ENCODE measurements at regions of chr1 and their contacts with region 1.

Region 1: DNA sequence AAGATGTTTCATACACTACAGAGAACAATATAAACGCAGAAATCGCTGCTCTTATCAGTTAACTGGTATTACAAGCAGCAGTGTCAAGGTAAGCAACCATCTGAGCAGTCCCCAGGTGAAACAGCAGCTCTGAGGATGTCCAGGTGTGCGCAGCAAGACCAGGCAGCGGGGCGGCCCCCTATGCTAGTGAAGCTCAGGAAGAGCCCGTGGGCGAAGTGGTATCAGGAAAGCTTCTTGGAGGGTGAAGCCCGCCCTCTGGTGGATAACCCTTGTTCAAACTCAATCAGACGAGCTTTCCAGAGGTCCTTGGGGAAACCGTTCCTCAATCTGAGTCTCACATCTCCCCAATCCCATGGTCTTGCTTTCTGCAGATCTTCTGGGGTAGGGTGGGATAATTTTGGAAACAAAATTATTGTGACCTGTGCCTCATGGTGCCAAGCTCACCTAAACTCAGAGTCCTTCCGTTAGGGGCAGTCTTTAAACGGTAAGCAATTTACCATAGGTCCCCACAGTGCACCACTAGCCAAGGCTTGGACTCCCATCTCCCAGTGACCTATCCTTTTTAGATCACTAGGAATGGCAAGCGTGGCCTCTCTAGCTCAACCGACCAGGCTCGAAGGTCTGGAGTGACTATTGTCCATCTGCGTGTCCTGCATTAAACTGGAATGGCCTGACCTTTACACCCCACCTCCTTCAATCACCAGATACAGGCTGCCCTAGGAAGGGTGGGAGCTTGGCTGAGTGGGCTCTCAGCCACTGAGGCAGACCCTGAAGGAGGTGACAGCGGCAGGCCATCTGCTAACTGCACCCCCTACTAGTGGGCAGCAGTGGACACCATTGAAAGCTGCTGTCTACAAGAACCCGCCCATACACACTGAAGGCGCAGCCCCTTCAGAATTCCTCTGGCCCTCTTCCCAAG is 13.6 kb upstream of the FAM110D start:
- DNase-seq: no peak
- H3K4me3 ChIP-seq: no peak overlapping the region
- CTCF ChIP-seq: peak; percentile 76

Region 2: GRCh38 chr1:26035959-26036755 is 109.1 kb before region 1 on chr1:
- CTCF ChIA-PET with region 1: interaction called, 105 read pairs
- POLR2A ChIA-PET with region 1: interaction called, 3 read pairs
- DNase-seq: no peak
- H3K4me3 ChIP-seq: peak overlapping the region; percentile 79
- CTCF ChIP-seq: peak; percentile 97

Region 3: DNA sequence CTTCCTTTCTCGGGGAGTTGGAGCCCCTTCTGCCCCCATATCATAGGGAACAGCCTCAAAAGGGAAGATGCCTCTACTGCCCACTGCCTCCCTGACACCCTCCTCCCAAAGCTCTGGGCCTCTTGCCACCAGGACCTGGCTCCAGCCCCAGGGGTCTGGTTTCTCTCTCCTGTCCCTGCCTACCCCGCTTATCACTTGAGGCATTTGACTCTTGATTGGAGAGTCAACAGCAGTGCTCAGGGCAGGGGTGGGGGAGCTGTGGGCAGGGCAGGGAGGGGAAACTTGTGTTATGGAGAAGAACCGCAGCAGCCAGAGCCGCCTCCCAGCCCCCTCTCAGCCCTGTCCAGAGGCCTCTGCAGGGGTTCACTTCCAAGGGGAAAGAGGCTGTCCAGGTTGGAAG is 78.4 kb before region 1 on chr1:
- CTCF ChIA-PET with region 1: interaction called, 14 read pairs
- POLR2A ChIA-PET with region 1: no interaction called
- DNase-seq: no peak
- H3K4me3 ChIP-seq: no peak overlapping the region
- CTCF ChIP-seq: no peak

Region 4: DNA sequence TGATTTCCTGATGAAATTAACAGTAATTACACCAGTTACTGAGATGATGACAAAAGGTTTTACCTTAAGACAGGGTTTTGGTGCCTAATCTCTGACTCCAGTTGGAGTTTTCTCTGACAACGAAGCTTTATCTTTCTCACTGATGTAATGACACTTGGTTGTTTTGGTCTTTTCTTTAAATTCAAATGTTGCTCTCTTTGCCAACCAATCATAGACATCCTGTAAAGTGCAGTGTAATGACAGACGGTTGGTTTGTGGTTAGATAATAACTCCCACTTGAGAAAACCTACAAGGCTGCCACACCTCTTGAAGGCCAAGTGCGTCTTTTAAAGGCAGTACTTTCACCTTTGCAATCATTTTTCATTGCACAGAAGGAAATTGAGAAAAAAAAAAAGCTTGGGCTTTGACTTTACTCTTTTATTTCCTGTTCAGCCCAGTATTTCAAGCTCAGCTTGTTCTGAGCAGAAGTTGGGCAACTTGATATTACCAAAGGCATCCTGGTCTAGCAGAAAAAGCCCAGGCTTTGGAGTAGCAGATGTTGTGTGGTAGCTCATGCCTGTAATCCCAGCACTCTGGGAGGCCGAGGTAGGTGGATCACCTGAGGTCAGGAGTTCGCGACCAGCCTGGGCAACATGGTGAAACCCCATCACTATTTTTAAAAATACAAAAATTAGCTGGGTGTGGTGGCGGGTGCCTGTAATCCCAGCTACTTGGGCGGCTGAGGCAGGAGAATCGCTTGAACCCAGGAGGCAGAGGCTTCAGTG is 18.8 kb before region 1 on chr1:
- CTCF ChIA-PET with region 1: interaction called, 150 read pairs
- POLR2A ChIA-PET with region 1: no interaction called
- DNase-seq: no peak
- H3K4me3 ChIP-seq: no peak overlapping the region
- CTCF ChIP-seq: no peak

Region 5: GRCh38 chr1:26161415-26162219 is 16.3 kb after region 1 on chr1:
- CTCF ChIA-PET with region 1: interaction called, 70 read pairs
- POLR2A ChIA-PET with region 1: no interaction called
- DNase-seq: no peak
- H3K4me3 ChIP-seq: peak overlapping the region; percentile 30
- CTCF ChIP-seq: peak; percentile 18

Region 6: GRCh38 chr1:26336477-26337205 is 191.3 kb after region 1 on chr1:
- CTCF ChIA-PET with region 1: no interaction called
- POLR2A ChIA-PET with region 1: no interaction called
- DNase-seq: no peak
- H3K4me3 ChIP-seq: peak overlapping the region; percentile 60
- CTCF ChIP-seq: no peak